ENCODE measurements at regions of chr19 and their contacts with region 1.

Region 1: DNA sequence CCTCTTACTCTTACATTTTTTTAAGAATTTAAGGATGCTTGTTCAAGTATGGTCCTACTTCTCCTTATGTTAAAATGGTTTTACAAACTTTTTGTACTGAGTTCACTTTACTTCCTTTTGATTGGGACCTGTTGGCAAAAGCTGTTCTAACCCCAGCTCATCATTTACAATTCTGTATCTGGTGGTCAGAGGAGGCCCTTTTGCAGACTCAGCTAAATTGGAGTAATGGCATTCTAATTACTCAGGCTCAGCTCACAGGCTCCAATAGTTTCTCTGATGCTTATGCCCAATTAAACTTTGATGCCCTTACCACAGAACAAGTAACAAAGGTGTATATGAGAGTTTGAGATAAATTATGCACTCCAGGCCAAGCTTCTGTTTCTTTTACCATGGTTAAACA is 1632.0 kb downstream of the UQCRFS1 start:
- DNase-seq: no peak
- ATAC-seq: no peak
- H3K4me3 ChIP-seq: no peak overlapping the region
- H3K27ac ChIP-seq: no peak overlapping the region
- H3K4me1 ChIP-seq: no peaks in the 10 kb centered on the region
- H3K27me3 ChIP-seq: no peaks in the 10 kb centered on the region
- CTCF ChIP-seq: no peak

Region 2: GRCh38 chr19:27929399-27929798 is 348.5 kb after region 1 on chr19:
- intact Hi-C with region 1: loop called in 1 of 2 experiments (anchors 10 kb)
- DNase-seq: no peak
- ATAC-seq: no peak
- H3K4me3 ChIP-seq: no peak overlapping the region
- H3K27ac ChIP-seq: no peak overlapping the region
- H3K4me1 ChIP-seq: no peaks in the 10 kb centered on the region
- H3K27me3 ChIP-seq: no peaks in the 10 kb centered on the region
- CTCF ChIP-seq: no peak

Measured in psoas muscle (tissue), 8 donors.